CD8-positive, alpha-beta T cell (primary cell): ENCODE measurements at regions of chr4 and their contacts with region 1.

Region 1: GRCh38 chr4:83259586-83259985 is 25.0 kb downstream of the COQ2 start:
- DNase-seq: no peak
- ATAC-seq: no peak
- H3K4me3 ChIP-seq: no peak overlapping the region
- H3K4me3 Mint-ChIP-seq: no peak overlapping the region
- H3K27ac ChIP-seq: no peak overlapping the region
- H3K27ac Mint-ChIP-seq: no peak overlapping the region
- H3K4me1 ChIP-seq: peaks cover 6% of the 10 kb centered on the region
- H3K4me1 Mint-ChIP-seq: peaks cover 13% of the 10 kb centered on the region
- H3K27me3 ChIP-seq: no peaks in the 10 kb centered on the region
- H3K27me3 Mint-ChIP-seq: no peaks in the 10 kb centered on the region
- CTCF ChIP-seq: no peak

Region 2: GRCh38 chr4:82462415-82462831 is 797.2 kb before region 1 on chr4:
- CTCF ChIA-PET with region 1: no interaction called
- POLR2A ChIA-PET with region 1: no interaction called
- intact Hi-C with region 1: loop called (anchors 1 to 2 kb)
- DNase-seq: peak; percentile 68 to 88 (median 84)
- ATAC-seq: peak; percentile 98
- H3K4me3 ChIP-seq: no peak overlapping the region
- H3K4me3 Mint-ChIP-seq: no peak overlapping the region
- H3K27ac ChIP-seq: no peak overlapping the region
- H3K27ac Mint-ChIP-seq: peak overlapping the region; percentile 20
- H3K4me1 ChIP-seq: peaks cover 3% of the 10 kb centered on the region
- H3K4me1 Mint-ChIP-seq: peaks cover 3% of the 10 kb centered on the region
- H3K27me3 ChIP-seq: no peaks in the 10 kb centered on the region
- H3K27me3 Mint-ChIP-seq: no peaks in the 10 kb centered on the region
- CTCF ChIP-seq: peak; percentile 79

Region 3: GRCh38 chr4:83054928-83055327 is 204.7 kb before region 1 on chr4:
- CTCF ChIA-PET with region 1: interaction called, 8 read pairs
- POLR2A ChIA-PET with region 1: no interaction called
- intact Hi-C with region 1: loop called in 1 of 2 experiments (anchors 5 kb)
- DNase-seq: peak in 2 of 9 experiments; percentile 35 to 54
- ATAC-seq: no peak
- H3K4me3 ChIP-seq: no peak overlapping the region
- H3K4me3 Mint-ChIP-seq: no peak overlapping the region
- H3K27ac ChIP-seq: no peak overlapping the region
- H3K27ac Mint-ChIP-seq: peak overlapping the region; percentile 11
- H3K4me1 ChIP-seq: no peaks in the 10 kb centered on the region
- H3K4me1 Mint-ChIP-seq: no peaks in the 10 kb centered on the region
- H3K27me3 ChIP-seq: no peaks in the 10 kb centered on the region
- H3K27me3 Mint-ChIP-seq: no peaks in the 10 kb centered on the region
- CTCF ChIP-seq: peak; percentile 61

Region 4: DNA sequence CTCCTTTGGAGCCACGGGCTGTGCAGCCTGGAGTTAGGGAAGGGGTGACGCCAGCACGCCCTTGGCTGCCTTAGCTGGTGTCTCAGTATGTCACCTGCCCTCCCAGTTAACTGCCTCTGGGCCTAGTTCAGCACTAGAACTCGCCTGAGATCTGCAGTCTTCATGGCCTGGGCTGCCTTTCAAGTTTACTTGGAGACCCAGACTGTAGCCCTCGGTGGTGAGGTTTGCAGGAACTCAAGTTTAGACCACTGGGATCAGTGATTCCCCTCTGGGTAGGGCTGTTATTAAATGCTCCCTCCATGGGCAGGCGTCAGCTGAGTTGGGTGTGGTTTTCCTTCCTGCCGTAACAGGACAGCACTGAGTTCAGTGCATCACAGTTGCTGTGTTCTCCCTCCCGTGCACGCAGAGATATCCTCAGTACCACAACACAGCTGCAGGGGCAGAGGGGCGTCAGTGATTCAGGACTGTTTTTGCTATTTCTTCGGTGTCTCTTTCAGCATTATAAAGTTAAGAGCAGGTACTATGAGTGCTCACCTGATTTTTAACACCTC is 175.6 kb before region 1 on chr4:
- CTCF ChIA-PET with region 1: interaction called, 13 read pairs
- POLR2A ChIA-PET with region 1: no interaction called
- intact Hi-C with region 1: no loop called
- DNase-seq: peak; percentile 44 to 91 (median 61)
- ATAC-seq: peak; percentile 98
- H3K4me3 ChIP-seq: no peak overlapping the region
- H3K4me3 Mint-ChIP-seq: peak overlapping the region; percentile 47
- H3K27ac ChIP-seq: peak overlapping the region; percentile 67 to 81
- H3K27ac Mint-ChIP-seq: peak overlapping the region; percentile 97
- H3K4me1 ChIP-seq: peaks cover 29% of the 10 kb centered on the region
- H3K4me1 Mint-ChIP-seq: peaks cover 39% of the 10 kb centered on the region
- H3K27me3 ChIP-seq: no peaks in the 10 kb centered on the region
- H3K27me3 Mint-ChIP-seq: no peaks in the 10 kb centered on the region
- CTCF ChIP-seq: peak; percentile 65

Region 5: DNA sequence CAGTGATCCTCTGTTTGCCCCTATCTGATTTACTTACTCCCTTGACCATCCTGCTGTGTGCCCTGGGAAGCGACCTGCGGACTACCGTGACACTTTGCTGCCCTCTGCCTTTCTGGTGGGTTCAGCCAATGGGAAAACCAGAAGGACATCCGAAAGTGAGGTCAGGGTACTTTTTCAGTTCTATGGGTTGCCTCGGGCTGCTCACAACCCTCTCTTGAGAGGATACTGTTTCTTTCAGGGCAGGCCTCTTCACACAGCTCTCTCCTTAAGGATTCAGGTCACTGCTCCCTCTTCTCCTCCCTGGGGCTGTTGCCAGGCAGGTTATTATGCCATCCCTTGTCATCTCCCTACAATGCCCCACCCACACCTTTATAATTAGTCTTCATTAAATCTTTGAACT is 166.5 kb before region 1 on chr4:
- CTCF ChIA-PET with region 1: interaction called, 24 read pairs
- POLR2A ChIA-PET with region 1: no interaction called
- intact Hi-C with region 1: no loop called
- DNase-seq: no peak
- ATAC-seq: no peak
- H3K4me3 ChIP-seq: no peak overlapping the region
- H3K4me3 Mint-ChIP-seq: no peak overlapping the region
- H3K27ac ChIP-seq: peak overlapping the region in 1 of 2 experiments; percentile 31
- H3K27ac Mint-ChIP-seq: peak overlapping the region; percentile 80
- H3K4me1 ChIP-seq: peaks cover 26% of the 10 kb centered on the region
- H3K4me1 Mint-ChIP-seq: peaks cover 53% of the 10 kb centered on the region
- H3K27me3 ChIP-seq: no peaks in the 10 kb centered on the region
- H3K27me3 Mint-ChIP-seq: no peaks in the 10 kb centered on the region
- CTCF ChIP-seq: no peak

Region 6: DNA sequence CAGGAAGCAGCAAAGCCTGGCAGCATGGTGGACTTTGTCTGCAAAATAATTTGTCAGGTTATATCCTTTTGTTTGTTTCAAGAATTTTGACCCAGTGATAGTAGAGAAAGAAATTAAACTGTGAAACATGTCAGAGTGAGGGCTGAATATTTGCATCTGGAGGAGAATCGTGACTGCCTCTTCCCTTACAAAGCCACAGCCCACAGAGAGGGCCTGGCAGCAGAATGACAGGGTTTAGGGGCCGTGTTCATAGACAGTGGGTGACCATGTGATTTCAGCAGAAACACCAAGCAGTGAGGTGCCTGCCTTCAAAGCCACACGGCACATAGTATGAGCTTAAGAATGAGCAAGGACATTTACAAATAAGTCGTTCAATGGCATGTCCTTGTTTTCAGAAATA is 120.6 kb before region 1 on chr4:
- CTCF ChIA-PET with region 1: interaction called, 33 read pairs
- POLR2A ChIA-PET with region 1: no interaction called
- intact Hi-C with region 1: loop called in 1 of 2 experiments (anchors 10 kb)
- DNase-seq: peak in 8 of 9 experiments; percentile 17 to 75 (median 47)
- ATAC-seq: peak; percentile 93
- H3K4me3 ChIP-seq: no peak overlapping the region
- H3K4me3 Mint-ChIP-seq: peak overlapping the region; percentile 24
- H3K27ac ChIP-seq: peak overlapping the region in 1 of 2 experiments; percentile 72
- H3K27ac Mint-ChIP-seq: peak overlapping the region; percentile 80
- H3K4me1 ChIP-seq: peaks cover 27% of the 10 kb centered on the region
- H3K4me1 Mint-ChIP-seq: peaks cover 31% of the 10 kb centered on the region
- H3K27me3 ChIP-seq: no peaks in the 10 kb centered on the region
- H3K27me3 Mint-ChIP-seq: no peaks in the 10 kb centered on the region
- CTCF ChIP-seq: no peak

Region 7: DNA sequence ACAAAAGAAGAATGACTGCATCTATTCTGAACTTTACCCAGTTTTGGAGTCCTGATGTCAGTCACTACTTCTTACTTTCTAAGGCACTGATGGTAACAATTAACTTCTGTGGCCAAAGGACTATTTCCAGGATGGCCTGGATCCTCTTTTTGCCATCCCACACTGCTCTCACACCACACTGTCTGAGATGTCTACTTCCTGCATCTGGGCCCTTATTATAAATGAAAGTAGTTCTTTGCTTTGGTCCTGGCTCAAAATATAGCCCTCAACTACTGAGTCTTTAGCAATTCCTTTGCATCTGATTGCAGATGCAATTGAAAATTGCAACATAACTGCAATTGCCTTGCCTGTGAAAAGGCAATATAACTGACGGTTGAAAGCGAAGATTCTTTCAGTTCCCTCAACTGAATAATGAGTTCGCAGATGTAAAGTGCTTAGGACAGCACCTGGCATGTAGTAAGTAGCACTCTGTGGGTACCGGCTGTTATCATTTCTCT is 19.2 kb before region 1 on chr4:
- CTCF ChIA-PET with region 1: interaction called, 15 read pairs
- POLR2A ChIA-PET with region 1: no interaction called
- intact Hi-C with region 1: no loop called
- DNase-seq: no peak
- ATAC-seq: no peak
- H3K4me3 ChIP-seq: no peak overlapping the region
- H3K4me3 Mint-ChIP-seq: no peak overlapping the region
- H3K27ac ChIP-seq: no peak overlapping the region
- H3K27ac Mint-ChIP-seq: peak overlapping the region; percentile 73
- H3K4me1 ChIP-seq: peaks cover 23% of the 10 kb centered on the region
- H3K4me1 Mint-ChIP-seq: peaks cover 49% of the 10 kb centered on the region
- H3K27me3 ChIP-seq: no peaks in the 10 kb centered on the region
- H3K27me3 Mint-ChIP-seq: no peaks in the 10 kb centered on the region
- CTCF ChIP-seq: no peak